Sciatic nerve (tissue), 2 donors: ENCODE measurements at regions of chr3 and their contacts with region 1.

Region 1: GRCh38 chr3:40842714-40843113 is 318.0 kb downstream of the ZNF621 start:
- DNase-seq: no peak
- ATAC-seq: no peak

Region 2: DNA sequence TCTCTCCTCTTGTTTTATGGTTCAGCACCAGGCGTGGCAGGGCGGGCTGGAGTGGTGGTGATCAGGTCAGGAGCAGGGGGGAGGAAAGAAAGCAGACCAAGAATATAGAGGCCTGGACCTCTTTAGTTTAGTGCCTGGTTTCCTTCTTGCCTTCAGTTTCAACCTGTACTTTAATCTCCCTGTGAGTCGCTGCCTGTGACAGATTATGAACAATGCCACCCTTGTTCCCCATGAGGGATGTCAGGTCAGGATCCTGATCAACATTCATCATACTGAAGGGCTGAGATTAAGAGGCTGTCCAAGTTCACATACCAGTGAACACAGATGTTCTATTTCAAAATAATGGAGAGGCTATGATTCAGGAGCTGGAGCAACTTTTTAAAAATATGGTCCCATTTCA is 444.4 kb before region 1 on chr3:
- intact Hi-C with region 1: no loop called
- DNase-seq: no peak
- ATAC-seq: no peak

Region 3: DNA sequence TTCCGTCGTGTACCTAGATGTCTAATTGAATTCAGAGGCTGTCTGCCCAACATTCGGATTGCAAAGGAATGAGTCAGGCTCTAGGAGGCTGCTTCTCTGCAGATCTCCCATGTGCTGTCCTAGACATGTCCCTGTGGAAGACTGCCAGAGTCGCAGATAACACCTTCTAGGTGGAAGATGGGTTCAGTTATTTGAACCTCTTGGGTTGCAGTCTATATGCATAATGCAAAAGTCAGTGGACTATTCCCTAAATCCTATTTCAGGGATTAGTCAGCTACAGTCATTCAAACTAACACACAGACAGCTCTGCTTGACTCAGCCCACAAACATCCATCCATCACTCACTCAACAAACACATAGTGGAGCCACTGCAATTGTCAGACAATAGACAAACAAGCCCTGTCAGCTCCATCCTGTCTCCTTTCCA is 56.6 kb after region 1 on chr3:
- intact Hi-C with region 1: loop called (anchors 1 kb)
- DNase-seq: no peak
- ATAC-seq: no peak

Region 4: GRCh38 chr3:42129014-42129953 is 1286.6 kb after region 1 on chr3:
- intact Hi-C with region 1: no loop called
- DNase-seq: no peak
- ATAC-seq: peak; percentile 32